Activated T-helper 1 cell treated with anti-CD3 and anti-CD28 coated beads, Interleukin-12 subunit alpha, Interleukin-12 subunit beta, Interleukin-2, Interleukin-4 antibody, amounts not matched to agents 30 ng/mL and 10 ng/mL and 1 ng/mL, durations not matched to agents 14 hours and 24 hours and 36 hours (primary cell): ENCODE measurements at regions of chr20 and their contacts with region 1.

Region 1: DNA sequence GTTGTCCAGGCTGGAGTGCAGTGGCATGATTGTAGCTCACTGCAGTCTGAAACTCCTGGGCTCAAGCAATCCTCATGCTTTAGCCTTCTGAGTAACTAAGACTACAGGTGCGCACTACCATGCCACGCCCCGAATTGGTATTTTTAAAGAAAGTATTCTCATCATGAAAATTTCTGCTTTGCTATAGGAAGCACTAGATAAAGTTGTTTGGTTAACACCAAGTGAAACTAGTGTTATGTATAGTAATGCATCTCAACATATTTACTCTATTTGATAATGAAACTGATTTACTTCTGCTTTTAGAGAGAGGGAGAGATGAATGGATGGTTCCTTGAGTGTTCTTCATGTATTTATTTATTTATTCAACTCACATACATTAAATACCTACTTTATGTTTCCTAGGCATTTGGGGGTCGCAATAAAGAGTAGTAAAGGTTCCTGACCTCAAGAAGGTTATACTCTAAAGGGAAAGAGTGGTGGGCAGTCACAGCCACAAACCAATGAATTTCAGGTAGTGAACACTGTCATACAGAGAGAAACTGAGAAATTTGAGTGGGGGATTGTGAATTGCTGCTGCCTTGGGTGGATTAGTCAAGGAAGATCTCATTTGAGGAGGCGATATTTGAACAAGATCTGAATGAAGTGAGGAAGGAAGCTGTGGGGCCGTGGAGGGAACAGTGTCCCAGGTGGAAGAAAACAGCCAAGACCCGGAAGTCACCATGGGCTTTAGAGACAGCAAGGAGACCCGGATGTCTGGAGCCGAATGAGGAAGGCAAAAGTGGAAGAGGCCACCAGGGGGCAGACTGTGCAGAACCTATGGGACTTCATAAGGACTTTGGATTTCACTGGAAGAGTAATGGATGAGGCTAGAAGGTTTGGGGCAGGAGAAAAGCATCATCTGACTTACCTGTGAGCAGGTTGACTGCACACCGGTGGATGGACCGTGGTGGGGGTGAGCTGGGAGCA is 185.6 kb downstream of the TSHZ2 start:
- DNase-seq: no peak
- H3K4me3 Mint-ChIP-seq: peak overlapping the region; percentile 12
- H3K27ac Mint-ChIP-seq: peak overlapping the region; percentile 50
- H3K4me1 Mint-ChIP-seq: peaks cover 65% of the 10 kb centered on the region
- H3K27me3 Mint-ChIP-seq: no peaks in the 10 kb centered on the region

Region 2: DNA sequence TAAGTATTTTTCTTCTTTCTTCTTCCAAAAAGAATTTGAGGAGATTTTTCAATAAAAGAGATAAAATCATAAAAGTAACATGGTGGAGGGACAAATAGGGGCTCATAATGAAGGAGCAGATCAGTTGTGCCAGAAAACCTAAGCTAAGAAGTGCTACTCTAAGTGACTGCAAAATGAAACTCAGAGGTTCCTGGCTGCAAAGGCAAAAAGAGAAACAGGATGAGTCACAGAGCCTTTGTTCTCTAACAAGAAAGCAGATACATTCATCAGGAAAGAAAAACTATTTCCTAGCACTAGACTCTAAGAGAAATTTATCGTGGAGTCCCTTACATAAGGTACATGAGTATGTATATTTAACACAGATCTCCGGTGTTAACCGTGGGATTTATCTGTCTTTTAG is 135.8 kb before region 1 on chr20:
- intact Hi-C with region 1: no loop called
- DNase-seq: peak; percentile 33
- H3K4me3 Mint-ChIP-seq: peak overlapping the region; percentile 24
- H3K27ac Mint-ChIP-seq: peak overlapping the region; percentile 90
- H3K4me1 Mint-ChIP-seq: peaks cover 87% of the 10 kb centered on the region
- H3K27me3 Mint-ChIP-seq: no peaks in the 10 kb centered on the region

Region 3: DNA sequence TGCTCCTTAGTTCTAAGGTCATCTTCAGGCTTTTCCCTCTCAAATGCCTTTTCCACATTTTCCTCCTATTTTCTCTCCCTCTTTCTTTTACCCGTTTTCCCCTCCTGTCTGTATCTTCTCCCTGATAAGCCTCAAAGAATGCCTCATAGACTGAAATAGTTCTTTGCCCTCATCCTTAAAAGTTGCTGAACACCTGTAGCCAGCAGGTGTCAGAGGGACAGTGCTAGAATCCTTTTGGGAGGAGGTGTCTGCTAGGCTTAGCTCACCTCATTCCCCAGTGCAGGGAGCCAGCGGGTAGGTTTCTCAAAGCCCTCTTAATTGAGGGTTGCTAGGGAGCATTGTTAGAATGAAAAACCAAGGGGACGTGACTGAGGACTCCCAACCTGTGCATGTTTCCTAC is 18.4 kb after region 1 on chr20:
- intact Hi-C with region 1: no loop called
- DNase-seq: no peak
- H3K4me3 Mint-ChIP-seq: no peak overlapping the region
- H3K27ac Mint-ChIP-seq: no peak overlapping the region
- H3K4me1 Mint-ChIP-seq: peaks cover 11% of the 10 kb centered on the region
- H3K27me3 Mint-ChIP-seq: peaks cover 2% of the 10 kb centered on the region

Region 4: GRCh38 chr20:53202777-53203176 is 45.1 kb after region 1 on chr20:
- intact Hi-C with region 1: loop called (anchors 2 kb)
- DNase-seq: no peak
- H3K4me3 Mint-ChIP-seq: no peak overlapping the region
- H3K27ac Mint-ChIP-seq: no peak overlapping the region
- H3K4me1 Mint-ChIP-seq: peaks cover 23% of the 10 kb centered on the region
- H3K27me3 Mint-ChIP-seq: no peaks in the 10 kb centered on the region